WTC11 (cell line): ENCODE measurements at regions of chr15 and their contacts with region 1.

Region 1: GRCh38 chr15:61243983-61244593 is 15.0 kb upstream of the RORA start:
- DNase-seq: no peak
- ATAC-seq: no peak
- H3K4me3 Mint-ChIP-seq: no peak overlapping the region
- H3K27ac Mint-ChIP-seq: no peak overlapping the region
- H3K4me1 Mint-ChIP-seq: peaks cover 14% of the 10 kb centered on the region
- H3K27me3 Mint-ChIP-seq: peaks cover 3% of the 10 kb centered on the region; the same call in 1 of the 2 replicates
- CTCF ChIP-seq: no peak

Region 2: DNA sequence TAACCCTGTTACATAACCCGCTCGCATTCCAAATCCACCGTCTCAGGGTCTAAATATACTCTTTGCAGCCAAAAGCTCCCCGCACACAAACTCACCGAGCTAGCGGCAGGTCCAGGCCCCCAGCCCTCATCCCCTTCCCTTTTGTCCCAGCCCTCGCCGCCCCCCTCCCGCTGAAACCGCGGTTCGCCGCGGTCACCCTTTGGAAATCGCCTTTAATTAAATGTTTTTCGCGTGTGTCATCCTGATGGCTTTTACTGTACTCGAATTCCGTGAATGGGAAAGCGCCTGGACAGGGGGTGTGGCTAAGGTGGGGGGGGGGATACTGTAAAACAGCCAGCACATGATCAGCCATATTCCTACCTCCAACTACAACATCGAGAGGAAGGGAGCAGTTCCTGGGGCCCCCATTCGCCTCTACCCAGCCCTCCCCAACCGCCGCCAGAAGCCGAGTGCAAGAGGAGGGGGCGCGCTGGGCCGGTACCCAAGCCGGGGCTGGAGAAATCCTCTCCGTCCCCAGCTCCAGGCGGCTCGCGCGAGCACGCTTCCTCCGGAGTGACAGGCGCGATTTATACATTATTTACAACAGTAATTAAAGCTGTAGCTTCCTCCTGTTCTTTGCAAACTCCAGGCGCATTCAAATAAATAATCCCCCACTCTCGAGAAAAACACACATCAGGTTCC is 16.7 kb before region 1 on chr15:
- CTCF ChIA-PET with region 1: interaction called, 11 read pairs
- POLR2A ChIA-PET with region 1: interaction called, 3 read pairs
- DNase-seq: peak; percentile 38
- ATAC-seq: no peak; the same call in 1 of the 2 replicates
- H3K4me3 Mint-ChIP-seq: peak overlapping the region; percentile 86
- H3K27ac Mint-ChIP-seq: no peak overlapping the region
- H3K4me1 Mint-ChIP-seq: peaks cover 31% of the 10 kb centered on the region
- H3K27me3 Mint-ChIP-seq: peaks cover 5% of the 10 kb centered on the region
- CTCF ChIP-seq: no peak

Region 3: DNA sequence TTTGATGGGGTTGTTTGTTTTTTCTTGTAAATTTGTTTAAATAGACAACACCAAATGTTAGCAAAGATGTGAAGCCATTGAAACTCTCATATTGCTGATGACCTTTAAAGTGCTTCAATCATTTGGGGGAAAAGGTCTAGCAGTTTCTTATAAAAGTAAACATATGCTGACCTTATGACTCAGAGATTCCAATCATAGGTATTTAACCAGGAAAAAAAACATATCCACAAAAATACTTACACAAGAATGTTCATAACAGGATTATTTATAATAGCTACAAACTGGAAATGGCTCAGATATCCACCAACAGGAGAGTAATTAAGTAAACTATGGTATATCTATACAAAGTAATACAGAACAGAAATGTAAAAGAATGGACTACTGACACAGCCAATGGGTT is 12.1 kb after region 1 on chr15:
- CTCF ChIA-PET with region 1: no interaction called
- POLR2A ChIA-PET with region 1: no interaction called
- DNase-seq: no peak
- ATAC-seq: no peak
- H3K4me3 Mint-ChIP-seq: no peak overlapping the region
- H3K27ac Mint-ChIP-seq: no peak overlapping the region
- H3K4me1 Mint-ChIP-seq: no peaks in the 10 kb centered on the region
- H3K27me3 Mint-ChIP-seq: no peaks in the 10 kb centered on the region
- CTCF ChIP-seq: no peak